Sciatic nerve (tissue), 2 donors: ENCODE measurements at regions of chr6 and their contacts with region 1.

Region 1: DNA sequence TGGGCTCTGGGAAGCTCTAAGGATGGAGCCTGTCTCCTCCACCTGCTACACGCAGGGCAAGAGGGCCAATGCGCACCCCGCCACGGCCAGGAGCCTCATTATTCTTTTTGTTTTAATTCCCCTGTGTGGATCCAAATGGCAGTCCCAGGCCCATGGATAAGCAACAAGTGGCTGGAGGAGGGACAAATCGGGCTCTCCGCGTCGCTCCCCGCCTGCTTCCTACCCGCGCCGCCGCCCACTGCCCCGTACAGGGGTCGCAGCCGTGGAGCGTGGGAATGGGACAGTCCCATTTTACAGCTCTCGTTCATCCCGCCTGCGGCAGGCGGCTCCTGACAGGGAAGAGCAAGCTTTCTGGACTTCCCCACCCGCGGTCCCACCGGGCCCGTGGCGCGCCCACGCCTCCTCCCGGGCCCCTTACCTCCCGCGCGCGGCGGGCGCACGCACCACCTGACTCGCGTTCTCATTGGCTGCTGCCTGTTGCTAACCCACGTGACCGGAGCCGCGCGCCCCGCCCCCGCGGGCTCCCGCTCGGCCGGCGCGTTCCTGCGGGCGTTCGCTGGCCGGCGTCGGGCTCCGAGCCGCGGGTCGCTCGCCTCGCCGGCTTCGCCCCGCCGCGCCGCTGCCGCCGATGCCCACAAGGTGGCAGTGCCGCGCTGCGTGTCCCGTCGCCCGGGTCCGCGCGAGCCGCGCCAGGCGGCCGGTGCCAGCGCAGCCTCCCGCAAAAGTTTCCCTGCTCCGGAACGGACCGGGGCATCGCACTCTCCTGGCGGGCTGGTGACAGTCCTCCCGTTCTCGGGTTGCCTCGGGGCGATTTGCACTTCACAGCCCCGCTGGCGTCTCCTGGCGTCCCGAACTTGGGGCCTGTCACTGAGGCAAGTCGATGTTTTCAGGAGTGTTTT is 93.3 kb downstream of the CD83 start:
- DNase-seq: peak; percentile 95
- ATAC-seq: peak; percentile 96

Region 2: DNA sequence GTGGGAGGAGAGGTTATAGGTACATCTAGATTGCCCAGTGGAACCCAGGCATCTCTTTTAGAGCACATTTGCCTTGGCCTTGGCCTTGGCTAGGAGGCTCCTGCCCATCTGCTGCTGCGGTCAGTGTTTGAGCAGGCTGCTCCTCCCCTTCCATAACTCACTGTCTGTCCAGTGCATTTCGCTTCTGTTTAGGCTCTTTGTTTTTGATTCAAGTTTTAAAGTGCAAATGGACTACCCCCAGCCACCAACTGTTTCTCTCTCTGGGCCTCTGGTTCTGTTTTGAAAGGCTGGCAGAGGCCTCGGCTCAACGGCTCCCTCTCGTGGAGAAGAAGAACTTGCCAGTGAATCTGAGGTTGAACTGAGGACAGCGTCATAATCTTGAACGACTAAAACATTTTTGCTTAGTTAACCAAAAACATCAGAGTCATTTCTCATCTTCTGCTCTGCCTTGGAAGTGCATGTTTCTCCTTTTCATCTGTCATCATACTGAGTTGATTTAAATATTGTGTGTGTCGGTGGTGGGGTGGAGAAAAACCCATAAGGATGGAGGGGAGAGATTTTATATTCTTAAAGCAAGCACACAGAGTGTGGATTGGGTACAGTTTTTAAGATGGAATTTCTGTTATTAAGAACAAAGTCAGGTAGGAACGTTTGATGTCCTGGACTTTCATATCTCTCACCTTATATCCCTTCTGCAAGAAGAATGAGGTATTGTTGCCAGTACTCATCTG is 1280.5 kb after region 1 on chr6:
- intact Hi-C with region 1: loop called (anchors 10 kb)
- DNase-seq: peak; percentile 89
- ATAC-seq: peak; percentile 92